HCT116 (cell line): ENCODE measurements at regions of chr10 and their contacts with region 1.

Region 1: DNA sequence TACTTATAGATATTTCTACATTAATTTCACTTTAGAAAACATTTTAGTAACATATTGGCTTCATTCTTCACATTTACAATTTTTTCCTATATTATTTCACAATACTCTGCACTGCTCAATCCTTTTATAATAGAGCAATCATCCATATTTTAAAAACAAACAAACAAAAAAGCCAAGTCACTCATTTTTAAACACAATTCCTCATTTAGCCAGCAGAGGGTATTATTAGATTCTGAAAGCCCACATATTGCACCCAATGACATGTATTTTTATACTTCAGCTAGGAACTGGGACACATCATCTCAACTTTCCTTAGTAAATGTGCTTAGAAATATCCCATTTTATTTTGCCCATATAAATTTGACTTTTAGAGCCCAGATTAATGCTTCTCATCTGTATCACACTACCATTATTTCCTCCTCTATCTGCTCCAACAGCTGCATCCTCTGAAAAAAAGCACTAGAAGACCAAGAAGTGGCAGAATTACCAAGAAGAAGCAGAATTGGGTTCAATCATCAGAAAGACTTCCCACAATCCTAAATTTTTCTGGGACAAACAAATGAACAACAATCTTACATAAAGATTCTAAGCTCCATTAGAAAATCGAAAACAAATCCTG is 29.5 kb downstream of the CTNNA3 start:
- DNase-seq: peak; percentile 60
- ATAC-seq: peak; percentile 67
- H3K4me3 ChIP-seq: no peak overlapping the region
- H3K27ac ChIP-seq: no peak overlapping the region
- H3K4me1 ChIP-seq: peaks cover 13 to 21% of the 10 kb centered on the region in 2 experiments
- H3K27me3 ChIP-seq: no peaks in the 10 kb centered on the region
- CTCF ChIP-seq: peak; percentile 48 to 64 (median 59)
- POLR2A ChIP-seq: no peak
- RAD21 ChIP-seq: peak; percentile 71

Region 2: DNA sequence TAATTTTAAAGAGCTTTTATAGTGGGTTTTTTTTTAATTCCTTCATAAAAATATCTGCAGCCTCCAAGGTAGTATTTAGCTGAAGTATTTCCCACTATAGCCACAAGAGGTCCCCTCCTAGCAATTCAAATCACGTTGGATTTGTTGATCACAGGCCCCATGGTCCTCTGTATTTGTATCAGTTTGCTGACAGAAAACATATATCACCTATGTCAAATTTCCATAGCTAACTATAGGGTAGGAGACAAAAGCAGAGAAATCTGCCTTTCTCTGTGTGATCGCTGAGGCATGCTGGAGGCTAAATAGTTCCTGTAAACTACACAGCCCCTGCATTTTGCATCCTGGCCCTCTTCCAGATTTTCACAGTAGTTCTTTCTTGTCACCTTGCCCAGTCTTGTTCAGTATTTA is 31.2 kb after region 1 on chr10:
- CTCF ChIA-PET with region 1: interaction called, 10 read pairs
- POLR2A ChIA-PET with region 1: no interaction called
- RAD21 ChIA-PET with region 1: no interaction called
- intact Hi-C with region 1: no loop called
- DNase-seq: peak; percentile 41
- ATAC-seq: peak; percentile 94
- H3K4me3 ChIP-seq: no peak overlapping the region
- H3K27ac ChIP-seq: no peak overlapping the region
- H3K4me1 ChIP-seq: peaks cover 0 to 3% of the 10 kb centered on the region in 2 experiments; a peak in 2 of 4 replicates
- H3K27me3 ChIP-seq: no peaks in the 10 kb centered on the region
- CTCF ChIP-seq: peak; percentile 64 to 69 (median 66); a peak in 5 of 6 replicates
- POLR2A ChIP-seq: no peak
- RAD21 ChIP-seq: peak; percentile 64

Region 3: DNA sequence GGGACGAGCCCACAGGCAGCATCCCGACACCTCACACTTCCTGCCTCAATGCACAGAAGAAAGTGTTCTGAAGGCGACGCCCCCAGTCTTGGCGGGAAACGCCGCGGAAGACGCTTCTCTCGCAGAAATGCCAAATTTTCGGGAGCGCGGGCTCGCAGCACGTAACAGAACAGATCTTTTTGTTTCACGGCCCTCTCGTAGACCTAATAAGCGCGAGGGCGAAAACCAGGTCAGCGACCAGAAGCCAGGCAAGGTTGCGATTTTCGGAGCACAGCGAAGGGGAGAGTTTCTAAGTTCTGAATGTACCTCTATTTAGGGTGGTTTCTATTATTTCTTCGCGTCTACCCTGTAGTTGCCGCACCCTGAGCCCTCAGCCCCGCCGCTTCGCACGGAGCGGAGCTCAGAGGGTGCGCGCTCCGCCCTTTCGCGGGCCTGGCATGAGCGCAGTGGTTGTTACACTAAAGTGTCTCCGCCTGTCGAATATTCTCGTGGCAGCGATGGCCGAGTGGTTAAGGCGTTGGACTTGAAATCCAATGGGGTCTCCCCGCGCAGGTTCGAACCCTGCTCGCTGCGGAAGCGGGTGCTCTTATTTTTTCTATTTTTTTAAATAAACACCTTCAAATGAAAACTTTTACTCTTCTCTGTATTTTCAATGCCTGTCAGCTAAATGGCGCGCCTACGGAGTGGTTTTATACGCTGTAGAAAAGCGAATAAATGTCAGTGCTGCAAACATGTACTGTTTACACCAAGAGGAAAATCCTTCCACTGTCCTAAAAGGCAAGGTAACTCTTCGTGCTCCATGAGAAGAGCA is 97.7 kb after region 1 on chr10:
- CTCF ChIA-PET with region 1: no interaction called
- POLR2A ChIA-PET with region 1: no interaction called
- RAD21 ChIA-PET with region 1: no interaction called
- intact Hi-C with region 1: loop called (anchors 5 kb)
- DNase-seq: peak; percentile 90
- ATAC-seq: peak; percentile 83
- H3K4me3 ChIP-seq: peak overlapping the region; percentile 50 to 60
- H3K27ac ChIP-seq: peak overlapping the region; percentile 48
- H3K4me1 ChIP-seq: peaks cover 7 to 30% of the 10 kb centered on the region in 2 experiments; a peak in 3 of 4 replicates
- H3K27me3 ChIP-seq: no peaks in the 10 kb centered on the region
- CTCF ChIP-seq: no peak
- POLR2A ChIP-seq: no peak
- RAD21 ChIP-seq: no peak

Region 4: GRCh38 chr10:68074775-68075549 is 408.4 kb after region 1 on chr10 and contains the start of gene HERC4:
- CTCF ChIA-PET with region 1: no interaction called
- POLR2A ChIA-PET with region 1: no interaction called
- RAD21 ChIA-PET with region 1: no interaction called
- intact Hi-C with region 1: no loop called
- DNase-seq: peak; percentile 79
- ATAC-seq: peak; percentile 92
- H3K4me3 ChIP-seq: peak within 1 kb of the TSS; percentile 89 to 95
- H3K27ac ChIP-seq: peak within 1 kb of the TSS; percentile 94
- H3K4me1 ChIP-seq: peaks cover 9 to 17% of the 10 kb centered on the region in 2 experiments
- H3K27me3 ChIP-seq: no peaks in the 10 kb centered on the region
- CTCF ChIP-seq: no peak
- POLR2A ChIP-seq: no peak
- RAD21 ChIP-seq: no peak
- total RNA-seq, gene HERC4: 36.5 TPM